ENCODE measurements at regions of chr10 and their contacts with region 1.

Region 1: DNA sequence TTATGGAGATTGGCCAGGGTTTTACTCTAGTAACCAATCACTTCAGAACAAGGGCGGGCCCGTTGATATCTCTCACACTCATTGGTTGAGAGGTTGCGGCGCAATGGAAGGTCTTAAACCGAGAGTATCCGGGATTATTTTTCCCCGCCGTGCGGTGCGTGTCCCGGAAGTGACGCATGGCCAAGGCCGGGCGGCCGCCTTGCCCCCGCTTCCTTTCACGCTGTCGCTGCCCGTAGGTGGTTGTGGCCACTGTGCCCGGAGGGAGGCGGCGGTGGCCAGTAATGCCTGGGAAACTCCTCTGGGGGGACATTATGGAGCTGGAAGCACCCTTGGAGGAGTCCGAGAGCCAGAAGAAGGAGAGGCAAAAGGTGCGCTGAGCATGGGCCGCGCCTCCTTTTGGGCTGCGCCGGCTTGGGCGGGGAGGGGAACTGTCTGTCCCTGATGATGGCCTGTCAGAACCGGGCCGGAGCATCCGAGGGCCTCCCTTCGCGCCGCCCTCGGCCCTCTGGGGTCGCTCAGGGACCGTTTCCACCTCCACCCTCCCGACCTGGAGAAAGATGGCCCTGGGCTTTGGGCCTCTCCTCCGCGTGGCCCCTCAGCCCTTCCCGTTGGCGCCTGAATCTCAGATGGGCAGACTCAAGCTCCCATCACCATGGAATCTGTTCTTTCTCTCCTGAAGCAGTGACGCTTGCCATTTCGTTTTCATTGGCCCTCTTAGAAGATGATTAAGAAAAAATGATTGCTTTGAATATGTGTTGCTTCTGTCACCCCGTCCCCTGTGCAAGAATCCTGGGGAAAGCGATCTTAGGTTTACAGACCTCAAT is at the start of gene DDX50:
- DNase-seq: peak; percentile 97
- H3K4me3 ChIP-seq: peak within 1 kb of the TSS; percentile 93
- H3K27ac ChIP-seq: peak within 1 kb of the TSS; percentile 97
- H3K27me3 ChIP-seq: no peaks in the 10 kb centered on the region
- CTCF ChIP-seq: no peak
- polyA plus RNA-seq, gene DDX50: 40.9 and 60.8 TPM in 2 replicates

Region 2: DNA sequence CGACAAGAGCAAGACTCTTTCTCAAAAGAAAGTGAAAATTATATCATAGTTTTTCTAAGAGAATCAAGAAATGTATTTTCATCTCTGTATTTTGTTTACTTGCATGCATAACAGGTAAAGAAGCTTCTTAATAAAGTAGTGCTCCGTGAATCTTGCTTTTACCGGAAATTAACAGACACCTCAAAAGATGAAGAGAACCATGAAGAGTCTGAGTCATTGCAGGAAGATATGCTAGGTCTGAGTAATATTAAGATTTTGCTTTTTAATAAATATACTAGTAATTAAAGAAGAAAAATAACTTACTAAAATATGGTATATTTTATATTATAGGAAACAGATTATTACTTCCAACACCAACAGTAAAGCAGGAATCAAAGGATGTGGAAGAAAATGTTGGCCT is 113.5 kb before region 1 on chr10:
- CTCF ChIA-PET with region 1: interaction called, 18 read pairs
- POLR2A ChIA-PET with region 1: no interaction called
- DNase-seq: no peak
- H3K4me3 ChIP-seq: no peak overlapping the region
- H3K27ac ChIP-seq: no peak overlapping the region
- H3K27me3 ChIP-seq: no peaks in the 10 kb centered on the region
- CTCF ChIP-seq: no peak

Region 3: DNA sequence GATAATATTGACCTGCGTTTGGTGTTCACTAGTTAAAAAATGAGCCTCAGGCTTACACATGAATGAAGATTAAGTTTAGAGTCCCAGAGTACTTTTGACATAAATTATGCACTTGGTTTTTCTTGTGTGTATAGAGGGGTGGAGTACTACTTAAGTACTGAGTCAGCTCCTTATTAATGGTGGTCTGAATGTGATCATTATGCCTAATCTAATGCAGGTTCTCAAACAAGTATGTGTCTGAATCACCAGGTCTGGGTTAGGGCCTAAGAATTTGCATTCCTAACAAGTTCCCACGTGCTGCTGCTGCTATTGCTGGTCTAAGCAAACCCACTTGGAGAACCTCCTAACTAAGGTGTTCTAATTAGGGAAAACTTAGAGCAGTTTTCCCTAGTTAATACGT is 104.7 kb before region 1 on chr10:
- CTCF ChIA-PET with region 1: interaction called, 17 read pairs
- POLR2A ChIA-PET with region 1: interaction called, 11 read pairs
- DNase-seq: no peak
- H3K4me3 ChIP-seq: no peak overlapping the region
- H3K27ac ChIP-seq: no peak overlapping the region
- H3K27me3 ChIP-seq: no peaks in the 10 kb centered on the region
- CTCF ChIP-seq: no peak

Region 4: GRCh38 chr10:68938119-68938518 is 36.8 kb after region 1 on chr10:
- CTCF ChIA-PET with region 1: no interaction called
- POLR2A ChIA-PET with region 1: no interaction called
- DNase-seq: no peak
- H3K4me3 ChIP-seq: no peak overlapping the region
- H3K27ac ChIP-seq: no peak overlapping the region
- H3K27me3 ChIP-seq: no peaks in the 10 kb centered on the region
- CTCF ChIP-seq: no peak